ENCODE measurements at regions of chr19 and their contacts with region 1.

Region 1: GRCh38 chr19:49546825-49547565 is 19.2 kb downstream of the RCN3 start:
- DNase-seq: peak; percentile 75
- H3K27ac ChIP-seq: no peak overlapping the region
- CTCF ChIP-seq: peak; percentile 82

Region 2: DNA sequence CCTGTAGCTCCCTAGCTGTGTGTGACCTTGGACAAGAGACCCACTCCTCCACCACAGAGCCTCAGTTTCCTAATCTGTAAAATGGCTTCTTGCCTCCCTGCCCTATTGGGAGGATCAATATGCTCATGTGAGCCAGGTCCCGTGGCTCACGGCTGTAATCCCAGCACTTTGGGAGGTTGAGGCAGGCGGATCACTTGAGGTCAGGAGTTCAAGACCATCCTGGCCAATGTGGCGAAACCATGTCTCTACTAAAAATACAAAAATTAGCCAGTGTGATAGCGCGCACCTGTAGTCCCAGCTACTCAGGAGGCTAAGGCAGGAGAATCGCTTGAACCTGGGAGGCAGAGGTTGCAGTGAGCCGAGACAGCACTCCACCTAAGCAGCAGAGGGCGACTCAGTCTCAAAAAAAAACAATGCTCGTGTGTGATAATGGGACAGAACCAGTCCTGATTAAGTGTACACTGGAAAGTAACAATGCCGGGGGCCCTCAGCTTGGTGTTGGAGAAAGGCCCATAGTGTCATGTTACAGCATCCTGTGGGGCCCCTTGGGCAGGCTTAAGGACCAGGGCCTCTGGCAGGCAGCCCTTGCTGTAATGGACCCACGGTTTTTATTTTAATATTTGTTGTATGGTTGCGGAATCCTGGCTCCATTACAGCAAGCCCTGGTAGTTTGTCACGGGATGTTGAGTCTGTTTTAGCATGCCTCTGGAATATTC is 44.0 kb before region 1 on chr19:
- CTCF ChIA-PET with region 1: interaction called, 18 read pairs
- POLR2A ChIA-PET with region 1: no interaction called
- DNase-seq: peak; percentile 48
- H3K27ac ChIP-seq: no peak overlapping the region
- CTCF ChIP-seq: peak; percentile 74

Region 3: DNA sequence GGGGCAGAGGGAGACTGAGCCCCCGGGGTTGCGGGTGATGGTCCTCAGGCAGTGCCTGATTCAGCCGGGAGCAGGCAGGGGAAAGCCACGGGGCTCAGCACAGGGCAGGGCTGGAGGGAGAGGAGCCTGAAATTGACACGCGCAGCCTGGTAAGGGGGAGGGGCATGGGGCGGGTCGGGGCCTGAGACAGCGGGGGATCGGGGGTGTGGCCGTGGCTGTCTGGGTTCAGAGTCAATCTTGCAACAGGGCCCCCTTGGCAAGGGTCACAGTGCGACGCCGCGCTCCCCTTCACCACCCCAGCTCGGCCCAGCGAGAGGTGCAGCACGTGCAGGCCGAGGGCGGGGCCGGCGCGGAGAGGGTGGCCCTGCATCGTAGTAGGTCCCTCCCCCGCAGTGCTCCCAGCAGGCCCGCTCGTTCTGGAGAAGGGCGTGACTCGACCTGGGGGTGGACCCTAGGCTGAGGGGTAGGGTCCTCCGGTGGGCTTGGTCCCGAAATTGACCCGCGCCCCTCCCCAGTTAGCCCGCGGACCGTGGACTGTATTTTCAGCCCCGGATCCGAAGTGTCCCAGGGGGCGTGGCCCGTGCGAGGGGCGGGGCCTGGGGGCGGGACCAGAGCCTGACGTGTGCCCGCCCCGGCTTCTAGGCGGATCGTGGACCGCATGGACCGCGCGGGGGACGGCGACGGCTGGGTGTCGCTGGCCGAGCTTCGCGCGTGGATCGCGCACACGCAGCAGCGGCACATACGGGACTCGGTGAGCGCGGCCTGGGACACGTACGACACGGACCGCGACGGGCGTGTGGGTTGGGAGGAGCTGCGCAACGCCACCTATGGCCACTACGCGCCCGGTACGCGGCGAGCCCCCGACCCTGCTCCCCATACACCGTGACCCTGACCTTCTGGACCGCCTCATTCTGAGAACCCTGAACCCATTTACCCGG is 13.2 kb before region 1 on chr19:
- CTCF ChIA-PET with region 1: interaction called, 10 read pairs
- POLR2A ChIA-PET with region 1: interaction called, 10 read pairs
- DNase-seq: peak; percentile 73
- H3K27ac ChIP-seq: peak overlapping the region; percentile 4; the same call in 1 of the 2 replicates
- CTCF ChIP-seq: peak; percentile 46